Activated CD4-positive, alpha-beta memory T cell treated with anti-CD3 and anti-CD28 coated beads, Interleukin-2, amount 10 ng/mL, durations not matched to agents 7 days and 5 days (primary cell): ENCODE measurements at regions of chr9 and their contacts with region 1.

Region 1: DNA sequence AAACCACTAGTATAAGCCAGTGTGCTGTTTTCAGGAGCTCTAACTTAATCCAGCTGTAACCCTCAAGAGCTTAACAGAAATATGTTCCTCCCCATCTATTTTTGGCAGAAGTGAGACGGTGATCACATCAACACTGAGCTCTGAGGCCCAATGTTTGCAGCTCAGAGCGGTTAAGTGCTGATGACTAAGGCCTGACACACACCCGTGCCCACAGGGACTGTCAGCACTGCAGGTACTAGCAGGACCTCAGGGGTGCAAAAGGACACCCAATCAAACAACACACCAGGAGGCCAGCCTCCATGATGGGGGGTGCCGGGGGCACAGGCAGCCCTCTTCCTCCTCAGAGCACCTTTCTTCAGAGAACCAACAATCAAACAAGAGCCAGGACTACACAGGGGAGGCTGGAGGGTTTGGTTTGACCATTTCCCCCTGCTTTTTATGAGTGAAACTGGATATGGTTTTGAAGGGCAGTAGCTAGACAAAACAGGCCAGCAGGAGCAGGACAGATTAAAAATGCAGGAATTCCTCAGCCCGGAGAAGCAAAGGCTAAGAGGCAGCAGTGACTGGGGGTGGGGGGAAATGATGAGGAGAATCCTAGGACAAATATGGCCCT is 61.3 kb downstream of the RAPGEF1 start:
- DNase-seq: peak; percentile 89
- H3K4me3 Mint-ChIP-seq: peak overlapping the region; percentile 46
- H3K27ac Mint-ChIP-seq: peak overlapping the region; percentile 95
- H3K4me1 Mint-ChIP-seq: peaks cover 86% of the 10 kb centered on the region
- H3K27me3 Mint-ChIP-seq: no peaks in the 10 kb centered on the region

Region 2: DNA sequence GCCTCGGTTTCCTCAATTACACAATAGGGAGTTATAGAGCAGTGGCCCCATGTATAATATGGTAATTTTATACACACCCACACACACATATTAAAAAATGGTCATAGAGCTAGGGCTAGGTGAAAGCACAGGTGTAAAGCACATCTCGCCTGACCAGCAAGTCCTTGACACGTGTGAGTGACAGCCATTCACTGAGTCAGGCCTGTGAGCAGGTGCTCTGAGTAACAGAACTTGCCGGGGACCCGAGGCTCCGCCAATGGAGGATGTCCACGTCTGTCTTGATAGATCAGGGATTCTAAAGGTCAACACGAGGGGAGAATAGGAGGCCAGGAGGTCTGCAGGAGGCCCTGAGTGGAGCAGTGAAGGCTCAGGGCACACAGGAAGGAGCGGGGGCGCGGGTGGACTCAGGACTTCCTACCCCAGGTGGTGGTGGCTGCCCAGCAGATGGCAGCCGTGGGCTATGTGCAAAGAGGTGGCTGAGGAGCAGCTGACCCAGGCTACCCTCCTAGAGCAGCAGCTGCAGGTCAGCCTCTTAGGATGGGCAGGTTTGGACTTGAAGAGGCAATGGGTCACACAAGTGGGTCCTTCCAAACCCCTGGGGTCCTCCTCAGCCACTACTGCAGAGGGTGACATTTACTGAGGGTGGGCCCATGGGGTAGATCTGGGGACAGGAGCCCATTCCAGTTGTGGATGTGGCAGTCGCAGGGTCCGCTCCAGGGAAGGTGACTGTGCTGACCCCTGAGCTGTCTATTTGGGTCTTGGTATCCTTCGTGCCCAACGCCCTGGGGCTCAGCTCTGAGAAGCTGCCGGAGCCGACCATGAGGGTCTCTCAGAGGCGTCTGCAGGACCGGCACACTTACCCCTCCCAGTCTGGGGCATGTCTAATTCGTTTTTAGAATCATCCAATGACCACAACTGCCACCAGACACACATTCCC is 87.4 kb before region 1 on chr9:
- CTCF ChIA-PET with region 1: interaction called, 10 read pairs
- POLR2A ChIA-PET with region 1: interaction called, 11 read pairs
- DNase-seq: peak; percentile 80
- H3K4me3 Mint-ChIP-seq: no peak overlapping the region
- H3K27ac Mint-ChIP-seq: peak overlapping the region; percentile 71
- H3K4me1 Mint-ChIP-seq: peaks cover 38% of the 10 kb centered on the region
- H3K27me3 Mint-ChIP-seq: no peaks in the 10 kb centered on the region

Region 3: DNA sequence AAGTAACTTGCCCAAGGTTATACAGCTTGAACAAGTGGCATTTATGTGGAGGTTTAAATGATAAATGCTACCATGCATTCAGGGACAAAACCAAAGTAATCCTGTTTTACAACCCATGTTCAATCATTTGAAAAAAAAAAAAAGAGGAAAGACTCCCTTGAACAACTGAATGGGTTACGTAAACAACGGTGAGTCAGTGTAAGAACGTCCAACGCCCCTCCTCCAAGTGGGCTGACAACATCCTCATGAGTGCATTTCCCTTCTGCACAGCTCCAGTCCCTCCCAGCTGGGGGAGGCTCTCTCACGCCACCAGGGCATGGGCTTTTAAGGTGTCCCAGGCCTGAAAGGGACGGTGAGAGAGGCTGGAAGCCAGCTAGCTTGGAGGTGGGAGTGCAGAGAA is 43.3 kb before region 1 on chr9:
- CTCF ChIA-PET with region 1: interaction called, 4 read pairs
- POLR2A ChIA-PET with region 1: interaction called, 22 read pairs
- DNase-seq: peak; percentile 84
- H3K4me3 Mint-ChIP-seq: no peak overlapping the region
- H3K27ac Mint-ChIP-seq: peak overlapping the region; percentile 80
- H3K4me1 Mint-ChIP-seq: peaks cover 52% of the 10 kb centered on the region
- H3K27me3 Mint-ChIP-seq: no peaks in the 10 kb centered on the region

Region 4: GRCh38 chr9:131656356-131657036 is 22.1 kb before region 1 on chr9:
- CTCF ChIA-PET with region 1: interaction called, 5 read pairs
- POLR2A ChIA-PET with region 1: interaction called, 23 read pairs
- DNase-seq: peak; percentile 81
- H3K4me3 Mint-ChIP-seq: peak overlapping the region; percentile 25
- H3K27ac Mint-ChIP-seq: peak overlapping the region; percentile 90
- H3K4me1 Mint-ChIP-seq: peaks cover 86% of the 10 kb centered on the region
- H3K27me3 Mint-ChIP-seq: no peaks in the 10 kb centered on the region

Region 5: GRCh38 chr9:131709771-131710454 is 31.3 kb after region 1 on chr9:
- CTCF ChIA-PET with region 1: interaction called, 7 read pairs
- POLR2A ChIA-PET with region 1: interaction called, 40 read pairs
- DNase-seq: peak; percentile 44
- H3K4me3 Mint-ChIP-seq: peak overlapping the region; percentile 39
- H3K27ac Mint-ChIP-seq: peak overlapping the region; percentile 88
- H3K4me1 Mint-ChIP-seq: peaks cover 79% of the 10 kb centered on the region
- H3K27me3 Mint-ChIP-seq: no peaks in the 10 kb centered on the region

Region 6: DNA sequence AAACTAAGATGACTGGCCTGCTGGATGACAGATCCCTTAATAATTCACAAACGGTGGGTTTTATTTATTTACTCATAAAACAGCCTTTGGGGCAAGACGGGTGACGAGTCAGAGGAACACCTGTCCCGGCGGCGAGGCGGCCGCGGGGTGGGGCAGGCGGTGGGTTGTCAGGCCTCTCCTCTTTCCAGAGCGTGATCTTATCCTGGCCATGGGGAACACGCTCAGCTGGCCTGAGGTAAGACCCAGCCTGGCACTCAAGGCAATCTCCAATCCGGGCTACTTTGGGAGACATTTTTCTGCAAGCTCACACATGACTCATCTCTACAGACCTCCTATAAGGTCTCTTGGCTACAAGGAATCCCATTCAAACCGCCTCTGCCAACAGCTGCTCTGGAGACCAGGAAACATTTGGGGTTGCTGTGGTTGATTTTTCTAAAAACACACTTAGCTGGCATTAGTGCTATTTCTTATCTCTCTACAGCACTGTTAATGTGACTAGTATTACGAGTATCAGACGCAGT is 55.0 kb after region 1 on chr9:
- CTCF ChIA-PET with region 1: interaction called, 87 read pairs
- POLR2A ChIA-PET with region 1: interaction called, 362 read pairs
- DNase-seq: peak; percentile 59
- H3K4me3 Mint-ChIP-seq: peak overlapping the region; percentile 71
- H3K27ac Mint-ChIP-seq: peak overlapping the region; percentile 99
- H3K4me1 Mint-ChIP-seq: peaks cover 85% of the 10 kb centered on the region
- H3K27me3 Mint-ChIP-seq: no peaks in the 10 kb centered on the region